ENCODE measurements at regions of chrX and their contacts with region 1.

Region 1: DNA sequence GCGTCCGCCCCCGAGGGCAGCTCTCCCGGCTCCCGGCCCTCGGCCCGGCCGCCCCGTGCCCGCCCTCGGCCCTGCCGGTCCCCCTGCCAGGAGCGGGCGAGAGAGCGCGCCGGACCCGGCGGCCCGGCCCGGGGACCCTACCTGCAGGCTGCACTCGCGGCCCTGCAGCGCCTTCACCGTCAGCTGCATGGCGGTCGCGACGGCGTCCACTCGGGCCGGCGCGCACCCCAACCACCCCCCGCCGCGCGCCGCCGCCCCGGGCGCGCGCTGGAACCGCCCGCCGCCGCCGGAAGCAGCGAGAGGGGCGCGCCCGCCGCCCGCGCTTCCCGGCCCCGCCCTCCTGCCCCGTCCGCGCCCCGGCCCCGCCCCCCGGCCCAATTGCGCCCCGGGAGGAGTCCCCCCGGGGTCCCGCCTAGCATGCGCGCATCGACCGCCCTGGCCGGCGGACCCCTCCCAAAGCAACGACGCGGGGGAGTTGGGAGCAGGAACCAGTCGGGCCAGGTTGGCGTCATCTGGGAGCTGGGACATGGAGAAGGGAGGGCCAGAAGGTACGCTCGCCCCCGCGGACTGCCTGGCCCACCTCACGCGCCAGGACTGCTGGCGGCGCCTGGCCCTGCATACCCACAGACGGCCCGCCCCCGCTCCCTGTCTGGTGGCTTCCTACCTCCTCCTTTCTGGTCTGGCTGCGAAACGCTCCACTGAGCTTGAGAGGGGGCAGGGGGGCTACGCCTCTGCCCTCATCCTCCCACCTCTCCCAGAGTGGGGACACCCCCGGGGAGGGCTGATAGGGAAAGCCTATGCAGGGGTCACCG is at the start of gene UBL4A:
- DNase-seq: peak; percentile 86
- total RNA-seq, gene UBL4A: 30.1 TPM

Region 2: GRCh38 chrX:154427009-154427770 is 59.4 kb before region 1 on chrX:
- intact Hi-C with region 1: loop called in 1 of 2 experiments (anchors 2 kb)
- DNase-seq: no peak

Region 3: DNA sequence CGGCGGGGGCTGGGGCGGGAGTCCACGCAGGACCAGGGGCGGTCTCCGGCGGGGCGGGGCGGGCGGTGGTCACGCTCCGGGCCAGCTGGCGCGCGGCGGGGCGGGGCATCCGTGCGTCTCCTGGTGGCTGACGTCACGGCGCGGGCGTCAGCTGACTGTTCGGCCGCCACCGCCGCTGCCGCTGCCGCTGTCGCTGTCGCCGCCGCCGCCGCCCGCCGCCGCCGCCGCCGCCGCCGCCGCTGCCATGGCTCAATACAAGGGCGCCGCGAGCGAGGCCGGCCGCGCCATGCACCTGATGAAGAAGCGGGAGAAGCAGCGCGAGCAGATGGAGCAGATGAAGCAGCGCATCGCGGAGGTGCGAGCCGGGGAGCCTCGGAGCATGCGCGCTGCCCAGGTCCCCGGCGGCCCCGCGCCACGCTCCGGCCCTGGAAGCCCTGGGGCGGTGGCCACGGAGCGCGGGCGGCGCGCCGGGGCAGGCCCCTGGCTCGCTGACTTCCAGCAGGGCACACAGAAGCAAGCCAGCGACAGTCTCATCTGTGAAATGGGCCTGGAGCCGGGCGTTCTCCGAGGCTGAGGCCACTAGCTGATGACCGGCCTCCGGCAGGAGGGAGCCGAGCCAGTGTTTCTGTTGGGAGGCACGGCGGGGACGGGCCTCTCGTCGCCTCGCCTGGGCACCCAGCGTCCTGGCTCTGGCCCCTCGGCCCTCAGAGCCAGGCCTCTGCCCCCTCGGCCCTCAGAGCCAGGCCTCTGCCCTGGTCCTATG is 42.4 kb before region 1 on chrX and contains the start of gene FAM50A:
- intact Hi-C with region 1: loop called in 1 of 2 experiments (anchors 5 kb)
- DNase-seq: peak; percentile 93
- total RNA-seq, gene FAM50A: 52.7 to 63.3 TPM

Region 4: DNA sequence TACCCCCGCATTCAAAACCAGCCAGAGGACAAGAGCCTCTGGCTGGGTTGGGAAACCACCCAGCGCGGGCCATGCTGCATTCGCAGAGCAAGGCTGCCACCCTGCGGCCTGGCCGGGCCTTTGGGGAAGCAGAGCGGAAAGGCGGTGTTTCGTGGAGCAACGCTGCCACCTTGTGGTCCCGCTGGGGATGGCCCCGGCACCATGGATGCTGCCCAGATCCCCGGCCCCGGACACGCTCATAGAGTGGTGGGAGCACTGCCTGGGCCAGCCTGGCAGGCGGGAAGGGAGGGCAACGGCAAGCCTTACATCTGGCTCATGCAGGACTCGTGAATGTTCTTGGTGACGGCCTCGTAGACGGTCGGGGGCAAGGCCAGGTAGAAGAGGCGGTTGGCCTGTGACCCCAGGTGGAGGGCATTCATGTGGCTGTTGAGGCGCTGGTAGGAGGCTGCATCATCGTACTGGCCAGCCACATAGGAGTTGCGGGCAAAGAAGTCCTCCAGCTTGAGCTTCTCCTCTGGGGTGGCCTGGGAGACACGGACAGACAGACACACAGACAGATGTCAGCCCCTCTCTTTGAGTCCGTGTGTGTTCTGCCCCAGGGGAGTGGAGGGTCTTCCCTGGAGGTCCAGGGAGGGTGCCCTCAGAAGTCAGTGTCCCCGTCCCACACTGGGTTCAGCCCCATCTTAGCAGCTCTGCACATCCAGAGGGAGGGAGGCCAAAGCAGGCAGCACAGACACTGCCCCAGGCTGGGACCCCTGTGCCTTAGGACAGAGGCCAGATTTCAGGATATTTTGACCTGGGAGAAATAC is 48.5 kb after region 1 on chrX:
- intact Hi-C with region 1: loop called in 1 of 2 experiments (anchors 5 kb)
- DNase-seq: peak; percentile 97

Measured in posterior vena cava (tissue), 2 donors.